Ascending aorta (tissue), 2 donors: ENCODE measurements at regions of chr12 and their contacts with region 1.

Region 1: DNA sequence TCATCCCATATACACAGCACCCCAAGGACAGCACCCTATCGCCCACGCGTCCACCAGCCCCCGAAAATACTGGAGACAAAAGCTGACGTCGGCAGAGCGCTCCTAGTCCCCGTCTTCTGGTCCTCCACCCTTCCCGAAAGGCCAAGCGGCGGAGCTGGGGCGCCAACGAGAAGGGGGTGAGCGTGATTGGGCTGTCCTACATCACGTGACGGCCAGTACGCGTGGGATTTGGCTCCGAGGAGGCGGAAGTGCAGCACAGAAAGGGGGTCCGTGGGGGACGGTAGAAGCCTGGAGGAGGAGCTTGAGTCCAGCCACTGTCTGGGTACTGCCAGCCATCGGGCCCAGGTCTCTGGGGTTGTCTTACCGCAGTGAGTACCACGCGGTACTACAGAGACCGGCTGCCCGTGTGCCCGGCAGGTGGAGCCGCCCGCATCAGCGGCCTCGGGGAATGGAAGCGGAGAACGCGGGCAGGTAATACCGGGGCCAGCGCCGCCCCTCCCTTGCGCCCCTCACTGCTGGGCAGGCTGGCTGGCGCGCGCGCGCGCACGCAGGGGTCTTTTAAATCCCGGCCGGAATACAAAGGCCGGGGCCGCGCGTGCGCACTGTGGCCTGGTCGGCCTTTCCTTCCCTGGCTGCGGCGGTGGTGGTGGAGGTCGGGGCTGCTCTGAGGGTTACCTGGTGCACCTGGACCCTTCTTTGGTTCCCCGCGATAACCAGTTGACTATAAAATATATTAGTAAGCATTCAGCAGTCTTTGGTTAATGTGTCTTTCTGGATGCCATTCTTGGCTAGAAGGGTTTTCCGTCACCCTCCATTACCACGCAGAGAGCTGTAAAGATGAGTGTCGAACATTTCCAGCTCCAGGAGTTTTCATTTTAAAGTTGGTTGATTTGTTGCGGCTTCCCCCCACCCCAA is at the start of gene TDG:
- DNase-seq: peak; percentile 95 to 99
- H3K4me3 ChIP-seq: peak within 1 kb of the TSS; percentile 77 to 81
- H3K27ac ChIP-seq: peak within 1 kb of the TSS; percentile 93 to 95
- H3K4me1 ChIP-seq: peaks cover 4 to 54% of the 10 kb centered on the region in 2 donors
- H3K27me3 ChIP-seq: no peaks in the 10 kb centered on the region
- CTCF ChIP-seq: peak in 2 of 3 experiments; percentile 15 to 32
- total RNA-seq, gene TDG: 11.8 TPM

Region 2: GRCh38 chr12:103166945-103167344 is 798.9 kb before region 1 on chr12:
- intact Hi-C with region 1: no loop called
- DNase-seq: no peak
- H3K4me3 ChIP-seq: no peak overlapping the region
- H3K27ac ChIP-seq: no peak overlapping the region
- H3K4me1 ChIP-seq: no peaks in the 10 kb centered on the region
- H3K27me3 ChIP-seq: no peaks in the 10 kb centered on the region
- CTCF ChIP-seq: no peak

Region 3: GRCh38 chr12:104049903-104050356 is 84.1 kb after region 1 on chr12 and contains the start of gene GLT8D2:
- intact Hi-C with region 1: loop called (anchors 1 kb)
- DNase-seq: peak in 1 of 2 donors; percentile 78
- H3K4me3 ChIP-seq: peak within 1 kb of the TSS; percentile 57 to 76
- H3K27ac ChIP-seq: peak within 1 kb of the TSS; percentile 77 to 88
- H3K4me1 ChIP-seq: peaks cover 6 to 29% of the 10 kb centered on the region in 2 donors
- H3K27me3 ChIP-seq: no peaks in the 10 kb centered on the region
- CTCF ChIP-seq: no peak
- total RNA-seq, gene GLT8D2: 72.3 TPM